HepG2 (cell line): ENCODE measurements at regions of chr11 and their contacts with region 1.

Region 1: GRCh38 chr11:12281571-12282478 is 95.5 kb upstream of the PARVA start:
- DNase-seq: peak; percentile 65
- ATAC-seq: peak; percentile 79
- H3K4me3 ChIP-seq: no peak overlapping the region
- H3K27ac ChIP-seq: no peak overlapping the region
- H3K4me1 ChIP-seq: peaks cover 12% of the 10 kb centered on the region
- H3K27me3 ChIP-seq: peaks cover 0 to 9% of the 10 kb centered on the region in 2 experiments; a peak in 2 of 5 replicates
- CTCF ChIP-seq: peak; percentile 94
- EP300 ChIP-seq: no peak
- POLR2A ChIP-seq: no peak
- RAD21 ChIP-seq: peak; percentile 91

Region 2: GRCh38 chr11:11787305-11788062 is 494.3 kb before region 1 on chr11:
- CTCF ChIA-PET with region 1: interaction called, 4 read pairs
- POLR2A ChIA-PET with region 1: no interaction called
- in situ Hi-C with region 1: no loop called
- intact Hi-C with region 1: loop called (anchors 5 kb)
- DNase-seq: peak; percentile 43
- ATAC-seq: peak; percentile 95
- H3K4me3 ChIP-seq: no peak overlapping the region
- H3K27ac ChIP-seq: no peak overlapping the region
- H3K4me1 ChIP-seq: no peaks in the 10 kb centered on the region
- H3K27me3 ChIP-seq: peaks cover 0 to 2% of the 10 kb centered on the region in 2 experiments; a peak in 1 of 5 replicates
- CTCF ChIP-seq: peak; percentile 89
- EP300 ChIP-seq: no peak
- POLR2A ChIP-seq: no peak
- RAD21 ChIP-seq: peak; percentile 70

Region 3: GRCh38 chr11:11931461-11932055 is 350.3 kb before region 1 on chr11:
- CTCF ChIA-PET with region 1: interaction called, 9 read pairs
- POLR2A ChIA-PET with region 1: no interaction called
- in situ Hi-C with region 1: loop called (anchors 10 kb)
- intact Hi-C with region 1: no loop called
- DNase-seq: peak; percentile 62
- ATAC-seq: peak; percentile 88
- H3K4me3 ChIP-seq: no peak overlapping the region
- H3K27ac ChIP-seq: no peak overlapping the region
- H3K4me1 ChIP-seq: no peaks in the 10 kb centered on the region
- H3K27me3 ChIP-seq: no peaks in the 10 kb centered on the region
- CTCF ChIP-seq: peak; percentile 62
- EP300 ChIP-seq: no peak
- POLR2A ChIP-seq: no peak
- RAD21 ChIP-seq: 0 out of 2 replicates have a peak, but pooled peaks have one; percentile 20

Region 4: DNA sequence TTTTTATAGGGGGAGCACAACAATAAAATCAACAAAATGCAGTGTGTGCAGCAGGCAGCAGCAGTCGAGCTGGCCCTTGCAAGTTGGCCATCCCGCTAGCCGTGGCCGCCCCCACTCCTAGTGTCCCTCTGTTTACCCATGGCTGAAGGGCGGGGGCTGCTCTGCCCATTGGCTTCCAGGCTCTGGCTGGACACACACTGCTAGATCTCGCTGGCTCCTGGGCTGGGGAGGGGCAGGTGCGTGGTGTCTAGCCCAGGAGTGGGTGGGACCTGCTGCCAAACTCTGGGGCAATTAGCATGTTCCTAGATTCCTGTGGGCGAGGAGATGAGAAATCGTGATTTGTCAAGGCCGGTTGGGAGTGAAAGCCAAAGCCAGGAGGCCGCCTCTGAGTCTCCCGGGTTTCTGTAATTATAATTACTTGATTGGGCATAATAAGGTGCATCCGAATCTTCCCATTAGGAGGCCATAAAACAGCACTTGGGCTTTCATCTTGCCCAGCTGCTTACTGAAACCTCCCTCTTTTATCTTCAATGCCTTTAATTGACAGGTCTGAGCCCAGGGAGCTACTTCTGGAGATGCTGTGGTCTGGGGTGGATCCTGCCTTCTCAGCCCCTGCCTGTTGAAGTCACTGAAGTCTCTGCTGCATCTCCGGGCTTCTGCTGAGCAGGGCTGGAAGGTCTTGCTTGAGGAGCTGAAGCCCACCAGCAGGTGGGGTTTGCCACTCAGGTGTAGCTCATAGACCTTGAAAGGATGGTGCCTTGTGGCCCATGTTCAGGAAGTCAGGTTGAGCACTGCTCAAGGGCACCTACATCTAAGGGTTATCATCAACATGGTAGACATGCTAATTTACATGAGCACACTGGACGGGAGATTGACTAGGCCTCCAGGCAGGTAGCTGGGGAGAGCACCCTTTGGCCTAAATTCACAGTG is 228.9 kb before region 1 on chr11:
- CTCF ChIA-PET with region 1: interaction called, 52 read pairs
- POLR2A ChIA-PET with region 1: interaction called, 3 read pairs
- in situ Hi-C with region 1: loop called (anchors 5 kb)
- intact Hi-C with region 1: no loop called
- DNase-seq: no peak
- ATAC-seq: peak; percentile 42; the same call in 2 of the 3 replicates
- H3K4me3 ChIP-seq: no peak overlapping the region
- H3K27ac ChIP-seq: no peak overlapping the region
- H3K4me1 ChIP-seq: peaks cover 36% of the 10 kb centered on the region
- H3K27me3 ChIP-seq: no peaks in the 10 kb centered on the region
- CTCF ChIP-seq: peak; percentile 54
- EP300 ChIP-seq: no peak
- POLR2A ChIP-seq: no peak
- RAD21 ChIP-seq: no peak

Region 5: GRCh38 chr11:12087075-12088004 is 194.5 kb before region 1 on chr11:
- CTCF ChIA-PET with region 1: interaction called, 6 read pairs
- POLR2A ChIA-PET with region 1: no interaction called
- in situ Hi-C with region 1: no loop called
- intact Hi-C with region 1: loop called (anchors 1 kb)
- DNase-seq: no peak
- ATAC-seq: peak; percentile 55
- H3K4me3 ChIP-seq: no peak overlapping the region
- H3K27ac ChIP-seq: no peak overlapping the region
- H3K4me1 ChIP-seq: peaks cover 71% of the 10 kb centered on the region
- H3K27me3 ChIP-seq: no peaks in the 10 kb centered on the region; a peak in 1 of 5 replicates
- CTCF ChIP-seq: no peak
- EP300 ChIP-seq: no peak
- POLR2A ChIP-seq: no peak
- RAD21 ChIP-seq: no peak

Region 6: DNA sequence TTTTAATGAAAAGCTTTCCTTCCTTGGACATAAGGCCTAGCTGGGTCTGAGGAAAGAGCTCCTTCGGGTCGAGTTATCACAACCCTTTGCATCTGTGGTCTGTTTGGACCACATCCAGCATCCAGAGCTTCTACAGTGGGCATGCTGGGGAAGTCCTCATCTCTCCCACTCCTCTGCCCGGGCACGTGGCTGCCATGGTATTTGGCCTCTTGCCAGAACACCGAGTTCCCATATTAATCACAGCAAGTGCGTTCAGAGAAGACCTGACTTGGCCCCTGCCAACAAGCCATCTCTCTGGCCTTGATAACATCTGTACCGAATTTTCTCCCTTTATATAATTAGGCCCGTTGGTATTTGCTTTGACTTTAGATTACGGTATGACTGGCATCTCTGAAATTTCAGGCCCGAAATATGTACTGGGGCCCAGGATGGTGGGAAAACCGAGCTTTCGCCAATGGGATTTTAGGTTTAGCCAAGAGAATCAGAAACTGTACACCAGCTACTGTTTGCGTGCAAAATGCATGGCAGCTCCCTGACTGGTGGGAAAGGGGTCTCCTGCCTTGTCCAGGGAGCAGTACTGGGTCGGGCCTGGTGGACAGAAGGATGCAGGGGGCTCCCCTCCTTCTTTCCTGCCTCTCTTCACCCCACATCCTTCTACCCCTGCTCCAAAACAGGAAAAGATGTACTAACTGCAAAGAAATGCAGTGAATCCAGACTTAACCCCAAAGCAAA is 81.4 kb before region 1 on chr11:
- CTCF ChIA-PET with region 1: no interaction called
- POLR2A ChIA-PET with region 1: no interaction called
- in situ Hi-C with region 1: no loop called
- intact Hi-C with region 1: no loop called
- DNase-seq: no peak
- ATAC-seq: no peak
- H3K4me3 ChIP-seq: no peak overlapping the region
- H3K27ac ChIP-seq: no peak overlapping the region
- H3K4me1 ChIP-seq: no peaks in the 10 kb centered on the region
- H3K27me3 ChIP-seq: no peaks in the 10 kb centered on the region
- CTCF ChIP-seq: no peak
- EP300 ChIP-seq: no peak
- POLR2A ChIP-seq: no peak
- RAD21 ChIP-seq: no peak

Region 7: GRCh38 chr11:12235947-12236743 is 45.7 kb before region 1 on chr11:
- CTCF ChIA-PET with region 1: interaction called, 10 read pairs
- POLR2A ChIA-PET with region 1: no interaction called
- in situ Hi-C with region 1: no loop called
- intact Hi-C with region 1: no loop called
- DNase-seq: peak; percentile 58
- ATAC-seq: peak; percentile 78
- H3K4me3 ChIP-seq: no peak overlapping the region
- H3K27ac ChIP-seq: no peak overlapping the region
- H3K4me1 ChIP-seq: peaks cover 26% of the 10 kb centered on the region
- H3K27me3 ChIP-seq: no peaks in the 10 kb centered on the region
- CTCF ChIP-seq: peak; percentile 69
- EP300 ChIP-seq: no peak
- POLR2A ChIP-seq: no peak
- RAD21 ChIP-seq: peak; percentile 58

Region 8: GRCh38 chr11:12485328-12485727 is 203.5 kb after region 1 on chr11:
- CTCF ChIA-PET with region 1: no interaction called
- POLR2A ChIA-PET with region 1: no interaction called
- in situ Hi-C with region 1: no loop called
- intact Hi-C with region 1: no loop called
- DNase-seq: no peak
- ATAC-seq: no peak
- H3K4me3 ChIP-seq: no peak overlapping the region
- H3K27ac ChIP-seq: no peak overlapping the region
- H3K4me1 ChIP-seq: no peaks in the 10 kb centered on the region
- H3K27me3 ChIP-seq: no peaks in the 10 kb centered on the region
- CTCF ChIP-seq: no peak
- EP300 ChIP-seq: no peak
- POLR2A ChIP-seq: no peak
- RAD21 ChIP-seq: no peak